ENCODE measurements at regions of chr10 and their contacts with region 1.

Region 1: DNA sequence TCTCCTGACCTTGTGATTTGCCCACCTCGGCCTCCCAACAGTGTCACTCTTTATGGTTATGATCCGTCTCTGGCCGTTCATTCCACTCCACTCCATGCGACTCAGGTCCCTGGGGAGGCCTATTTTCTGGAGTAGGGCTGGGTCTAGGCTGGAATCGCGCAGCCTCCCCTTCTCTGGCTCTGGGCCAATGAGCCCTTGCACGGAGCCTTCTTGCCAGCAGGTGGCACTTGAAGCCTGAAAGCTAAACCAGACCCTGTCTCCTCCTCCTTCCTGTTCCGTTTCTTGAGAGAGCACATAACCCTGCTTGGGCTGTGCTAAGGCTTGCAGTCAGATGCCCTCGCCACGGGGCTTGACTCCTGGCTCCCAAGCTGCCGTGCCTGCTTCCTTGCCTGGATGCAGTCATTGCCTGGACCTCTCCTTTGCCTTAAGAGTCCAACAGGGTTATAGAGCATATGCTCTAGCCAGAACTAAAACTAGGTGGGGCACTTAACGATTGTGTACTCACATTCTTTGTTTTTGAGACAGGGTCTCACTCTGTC is 9.6 kb upstream of the DNAJB12 start:
- DNase-seq: peak; percentile 66 to 81
- ATAC-seq: peak; percentile 90 to 98
- H3K4me3 ChIP-seq: peak overlapping the region in 2 of 4 donors; percentile 22 to 39
- H3K27ac ChIP-seq: peak overlapping the region in 3 of 4 donors; percentile 13 to 62 (median 34)
- H3K4me1 ChIP-seq: peaks cover 5 to 9% of the 10 kb centered on the region in 2 donors
- H3K27me3 ChIP-seq: no peaks in the 10 kb centered on the region
- CTCF ChIP-seq: peak; percentile 85 to 93 (median 90)
- POLR2A ChIP-seq: no peak

Region 2: GRCh38 chr10:72133517-72133916 is 230.8 kb before region 1 on chr10:
- in situ Hi-C with region 1: no loop called
- intact Hi-C with region 1: no loop called
- DNase-seq: no peak
- ATAC-seq: no peak
- H3K4me3 ChIP-seq: no peak overlapping the region
- H3K27ac ChIP-seq: no peak overlapping the region
- H3K4me1 ChIP-seq: peaks cover 0 to 6% of the 10 kb centered on the region in 2 donors
- H3K27me3 ChIP-seq: no peaks in the 10 kb centered on the region
- CTCF ChIP-seq: no peak
- POLR2A ChIP-seq: no peak

Region 3: DNA sequence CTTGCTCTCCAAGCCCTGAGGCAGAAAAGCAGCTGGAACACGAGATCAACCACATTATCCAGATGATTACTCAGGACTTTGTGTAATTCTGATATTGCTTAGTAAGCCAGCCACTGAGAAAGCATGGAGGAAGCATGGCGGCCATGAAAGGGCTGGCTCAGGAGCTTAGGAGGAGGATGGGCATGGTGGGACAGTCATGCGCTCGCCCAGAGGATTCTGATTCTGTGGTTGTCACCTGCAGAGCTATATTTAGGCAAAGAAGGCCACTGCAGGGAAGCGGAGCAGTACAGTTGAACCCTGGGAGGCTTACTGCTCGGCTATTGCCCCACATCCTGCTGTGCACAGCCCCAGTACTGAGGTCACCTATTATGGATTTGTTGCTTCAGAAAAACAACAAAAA is 119.2 kb after region 1 on chr10:
- in situ Hi-C with region 1: no loop called
- intact Hi-C with region 1: no loop called
- DNase-seq: peak; percentile 1 to 13
- ATAC-seq: peak in 1 of 2 donors; percentile 27
- H3K4me3 ChIP-seq: no peak overlapping the region
- H3K27ac ChIP-seq: no peak overlapping the region
- H3K4me1 ChIP-seq: no peaks in the 10 kb centered on the region
- H3K27me3 ChIP-seq: no peaks in the 10 kb centered on the region
- CTCF ChIP-seq: no peak
- POLR2A ChIP-seq: no peak

Region 4: GRCh38 chr10:72875250-72876055 is 511.1 kb after region 1 on chr10:
- in situ Hi-C with region 1: no loop called
- intact Hi-C with region 1: loop called (anchors 1 kb)
- DNase-seq: no peak
- ATAC-seq: peak in 1 of 2 donors; percentile 61
- H3K4me3 ChIP-seq: no peak overlapping the region
- H3K27ac ChIP-seq: no peak overlapping the region
- H3K4me1 ChIP-seq: no peaks in the 10 kb centered on the region
- H3K27me3 ChIP-seq: no peaks in the 10 kb centered on the region
- CTCF ChIP-seq: peak in 4 of 5 experiments; percentile 20 to 57 (median 36)
- POLR2A ChIP-seq: no peak

Region 5: DNA sequence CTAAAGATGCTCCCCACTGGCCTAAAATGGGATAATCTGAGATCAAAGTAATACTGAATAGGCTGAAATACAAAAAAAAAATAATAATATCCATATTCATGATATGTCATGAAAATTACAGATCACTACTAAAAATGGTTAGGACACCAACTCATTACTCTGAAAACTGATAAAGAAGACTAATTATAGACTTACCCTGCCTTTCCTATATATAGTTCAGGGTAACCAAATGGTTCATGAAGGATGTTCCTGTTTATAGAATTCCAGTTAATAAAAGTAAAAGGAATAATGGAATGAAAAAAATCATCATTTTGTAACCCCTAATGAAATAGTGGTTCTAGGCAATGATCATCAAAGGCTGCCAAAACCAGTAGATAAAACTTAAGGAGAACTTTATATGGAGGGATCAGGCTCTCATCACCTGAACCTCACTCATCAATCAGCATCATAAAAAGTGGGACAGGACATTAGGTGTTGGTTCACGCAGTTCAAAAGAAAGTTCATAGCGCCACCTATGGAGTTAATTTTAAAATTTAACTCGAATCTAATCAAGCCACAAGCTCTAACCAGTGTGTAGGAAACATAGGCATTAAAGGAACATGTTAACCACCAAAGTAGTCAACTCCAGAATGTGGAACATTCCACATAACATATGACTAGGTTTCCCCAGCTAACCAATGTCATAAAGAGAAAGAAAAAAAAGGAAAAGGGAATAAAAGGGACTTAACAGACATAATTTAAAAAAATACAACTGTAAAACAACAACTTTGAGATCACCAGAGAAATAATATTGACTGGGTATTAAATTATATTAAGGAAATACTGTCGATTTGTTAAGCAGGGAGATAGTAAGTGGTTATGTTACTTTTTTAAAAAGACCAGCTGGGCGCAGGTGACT is 696.7 kb after region 1 on chr10:
- in situ Hi-C with region 1: loop called in 2 of 4 experiments (anchors 25 kb)
- intact Hi-C with region 1: no loop called
- DNase-seq: no peak
- ATAC-seq: peak in 1 of 2 donors; percentile 50
- H3K4me3 ChIP-seq: no peak overlapping the region
- H3K27ac ChIP-seq: peak overlapping the region; percentile 1 to 39 (median 10)
- H3K4me1 ChIP-seq: peaks cover 4 to 11% of the 10 kb centered on the region in 2 donors
- H3K27me3 ChIP-seq: no peaks in the 10 kb centered on the region
- CTCF ChIP-seq: peak in 2 of 5 experiments; percentile 15 to 43
- POLR2A ChIP-seq: no peak